ENCODE measurements at regions of chr6 and their contacts with region 1.

Region 1: GRCh38 chr6:121020656-121021055 is 313.6 kb downstream of the TBC1D32 start:
- DNase-seq: no peak
- H3K4me3 ChIP-seq: no peak overlapping the region
- H3K27ac ChIP-seq: no peak overlapping the region
- H3K4me1 ChIP-seq: no peaks in the 10 kb centered on the region
- H3K27me3 ChIP-seq: no peaks in the 10 kb centered on the region
- CTCF ChIP-seq: no peak
- POLR2A ChIP-seq: no peak

Region 2: DNA sequence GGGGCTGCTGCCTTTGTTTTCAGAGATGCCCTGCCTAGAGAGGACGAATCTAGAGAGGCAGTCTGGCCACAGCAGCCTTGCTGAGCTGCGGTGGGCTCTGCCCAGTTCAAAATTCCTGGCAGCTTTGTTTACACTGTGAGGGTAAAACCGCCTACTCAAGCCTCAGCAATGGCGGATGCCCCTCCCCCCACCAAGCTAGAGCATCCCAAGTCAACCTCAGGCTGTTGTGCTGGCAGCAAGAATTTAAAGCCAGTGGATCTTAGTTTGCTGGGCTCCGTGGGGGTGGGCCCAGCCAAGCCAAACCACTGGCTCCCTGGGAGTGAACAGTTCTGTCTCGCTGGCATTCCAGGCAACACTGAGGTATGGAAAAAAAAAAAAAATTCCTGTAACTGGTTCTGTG is 657.2 kb before region 1 on chr6:
- intact Hi-C with region 1: no loop called
- DNase-seq: no peak
- H3K4me3 ChIP-seq: no peak overlapping the region
- H3K27ac ChIP-seq: no peak overlapping the region
- H3K4me1 ChIP-seq: no peaks in the 10 kb centered on the region
- H3K27me3 ChIP-seq: no peaks in the 10 kb centered on the region
- CTCF ChIP-seq: no peak
- POLR2A ChIP-seq: no peak

Region 3: DNA sequence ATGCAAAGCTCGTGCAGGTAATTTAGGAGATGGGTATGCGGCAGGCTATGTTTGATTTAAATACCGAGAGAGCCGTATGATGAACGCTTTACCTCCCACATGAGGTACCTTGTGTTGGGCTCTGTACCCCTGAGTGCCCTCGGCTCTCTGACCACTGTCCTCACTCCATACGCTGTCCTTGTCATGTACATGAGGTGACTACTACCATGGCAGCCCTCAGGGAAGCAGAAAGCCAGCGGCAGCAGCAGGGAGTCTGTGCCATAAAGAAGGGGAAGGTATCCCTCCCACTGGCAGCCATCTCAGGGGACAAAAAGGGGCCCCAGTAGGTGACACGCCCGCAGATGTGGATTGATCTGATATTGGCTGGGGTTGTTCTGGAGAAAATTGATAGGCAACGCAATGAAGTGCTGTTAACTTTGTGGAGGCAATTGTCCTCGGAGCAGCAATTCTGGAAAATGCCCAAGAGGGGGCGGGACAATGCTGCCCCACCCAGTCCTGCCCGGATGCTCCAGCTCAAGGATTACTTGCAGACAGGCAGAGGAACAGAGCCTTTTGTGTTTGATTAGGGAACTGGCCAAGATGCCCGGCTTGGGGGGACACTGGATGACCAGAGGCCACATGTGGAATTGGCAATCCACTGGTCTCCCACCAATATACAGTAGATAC is 1340.8 kb after region 1 on chr6:
- intact Hi-C with region 1: loop called (anchors 5 kb)
- DNase-seq: no peak
- H3K4me3 ChIP-seq: no peak overlapping the region
- H3K27ac ChIP-seq: no peak overlapping the region
- H3K4me1 ChIP-seq: no peaks in the 10 kb centered on the region
- H3K27me3 ChIP-seq: no peaks in the 10 kb centered on the region
- CTCF ChIP-seq: no peak
- POLR2A ChIP-seq: no peak

Measured in breast epithelium (tissue), 4 donors.